ENCODE measurements at regions of chr7 and their contacts with region 1.

Region 1: GRCh38 chr7:92425321-92425947 is 21.8 kb upstream of the GATAD1 start:
- DNase-seq: peak; percentile 32
- H3K4me3 Mint-ChIP-seq: no peak overlapping the region
- H3K27ac Mint-ChIP-seq: no peak overlapping the region
- H3K4me1 Mint-ChIP-seq: peaks cover 20% of the 10 kb centered on the region
- H3K27me3 Mint-ChIP-seq: peaks cover 31% of the 10 kb centered on the region

Region 2: GRCh38 chr7:92415225-92415624 is 10.2 kb before region 1 on chr7:
- CTCF ChIA-PET with region 1: interaction called, 23 read pairs
- DNase-seq: no peak
- H3K4me3 Mint-ChIP-seq: no peak overlapping the region
- H3K27ac Mint-ChIP-seq: no peak overlapping the region
- H3K4me1 Mint-ChIP-seq: no peaks in the 10 kb centered on the region
- H3K27me3 Mint-ChIP-seq: peaks cover 17% of the 10 kb centered on the region

Region 3: GRCh38 chr7:92461027-92462003 is 35.9 kb after region 1 on chr7:
- CTCF ChIA-PET with region 1: interaction called, 10 read pairs
- DNase-seq: peak; percentile 38
- H3K4me3 Mint-ChIP-seq: no peak overlapping the region
- H3K27ac Mint-ChIP-seq: no peak overlapping the region
- H3K4me1 Mint-ChIP-seq: no peaks in the 10 kb centered on the region
- H3K27me3 Mint-ChIP-seq: no peaks in the 10 kb centered on the region

Region 4: DNA sequence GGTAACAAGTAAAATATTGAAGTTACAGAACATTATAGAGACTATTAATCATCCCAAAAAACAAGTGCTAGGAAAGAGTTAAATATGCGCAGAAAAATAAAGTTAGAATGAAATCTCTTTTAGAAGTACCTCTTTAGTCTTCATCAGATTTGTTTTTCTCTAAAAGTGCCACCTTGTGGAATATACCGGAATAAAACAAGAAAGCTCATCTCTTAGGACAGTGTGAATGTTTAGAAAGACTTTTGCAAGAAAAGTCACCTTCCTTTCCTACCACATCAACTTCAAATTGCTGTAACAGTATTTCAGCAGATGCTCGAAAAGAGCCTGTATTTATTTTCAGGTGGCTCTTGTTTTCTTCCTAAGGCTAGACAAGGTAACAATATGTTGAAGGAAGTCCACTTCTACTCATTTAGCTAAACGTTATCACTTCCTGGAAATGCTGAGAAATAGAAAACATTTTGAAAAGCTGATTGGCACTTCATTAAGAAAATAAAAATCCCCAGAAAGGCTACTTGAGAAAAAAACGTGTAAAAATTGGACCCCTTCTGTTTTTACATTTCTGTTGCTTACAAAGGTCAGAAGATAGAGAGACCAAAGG is 184.6 kb after region 1 on chr7:
- CTCF ChIA-PET with region 1: no interaction called
- DNase-seq: no peak
- H3K4me3 Mint-ChIP-seq: no peak overlapping the region
- H3K27ac Mint-ChIP-seq: peak overlapping the region; percentile 58
- H3K4me1 Mint-ChIP-seq: peaks cover 22% of the 10 kb centered on the region
- H3K27me3 Mint-ChIP-seq: no peaks in the 10 kb centered on the region

Region 5: DNA sequence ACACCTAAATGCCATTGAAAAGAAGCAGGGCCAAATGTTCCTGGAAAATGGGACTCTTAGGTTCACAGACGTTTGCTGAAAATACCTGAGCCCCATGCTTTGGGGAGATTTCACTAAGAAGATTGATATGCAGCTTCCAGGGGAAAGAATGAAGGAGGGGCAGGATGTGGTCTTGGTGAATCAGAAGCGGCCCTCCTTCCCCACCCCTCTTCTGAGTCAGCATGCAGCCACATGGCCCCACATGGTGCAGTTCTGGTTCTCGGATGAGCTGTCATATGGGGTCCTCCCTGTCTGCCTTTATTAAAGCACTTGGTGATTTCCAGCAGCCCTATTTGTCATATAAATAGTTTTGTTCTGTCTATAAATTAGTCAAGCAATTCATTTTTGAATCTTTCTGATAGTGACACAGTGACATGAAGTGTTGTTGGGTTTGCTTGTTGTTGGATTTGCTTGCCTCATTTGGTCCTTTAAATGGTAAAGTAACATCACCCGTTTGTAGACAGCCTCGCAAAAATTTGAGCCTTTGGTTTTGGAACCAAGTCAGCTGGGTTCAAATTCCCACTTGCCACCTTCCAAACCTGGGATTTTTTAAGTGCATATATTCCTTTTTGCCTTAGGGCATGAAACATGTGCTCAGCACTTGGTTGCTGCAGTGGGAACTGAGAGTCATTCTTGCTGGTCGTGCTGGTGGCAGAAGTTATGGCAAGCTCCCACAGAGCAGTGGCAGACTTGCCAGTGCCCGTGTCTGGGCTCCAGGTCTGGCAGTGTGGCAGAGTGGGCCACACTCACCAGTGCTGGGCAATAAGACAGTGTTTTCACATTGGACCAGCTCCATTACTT is 479.1 kb after region 1 on chr7:
- CTCF ChIA-PET with region 1: no interaction called
- DNase-seq: peak; percentile 84
- H3K4me3 Mint-ChIP-seq: no peak overlapping the region
- H3K27ac Mint-ChIP-seq: peak overlapping the region; percentile 81
- H3K4me1 Mint-ChIP-seq: peaks cover 23% of the 10 kb centered on the region
- H3K27me3 Mint-ChIP-seq: no peaks in the 10 kb centered on the region